ENCODE measurements at regions of chr12 and their contacts with region 1.

Region 1: DNA sequence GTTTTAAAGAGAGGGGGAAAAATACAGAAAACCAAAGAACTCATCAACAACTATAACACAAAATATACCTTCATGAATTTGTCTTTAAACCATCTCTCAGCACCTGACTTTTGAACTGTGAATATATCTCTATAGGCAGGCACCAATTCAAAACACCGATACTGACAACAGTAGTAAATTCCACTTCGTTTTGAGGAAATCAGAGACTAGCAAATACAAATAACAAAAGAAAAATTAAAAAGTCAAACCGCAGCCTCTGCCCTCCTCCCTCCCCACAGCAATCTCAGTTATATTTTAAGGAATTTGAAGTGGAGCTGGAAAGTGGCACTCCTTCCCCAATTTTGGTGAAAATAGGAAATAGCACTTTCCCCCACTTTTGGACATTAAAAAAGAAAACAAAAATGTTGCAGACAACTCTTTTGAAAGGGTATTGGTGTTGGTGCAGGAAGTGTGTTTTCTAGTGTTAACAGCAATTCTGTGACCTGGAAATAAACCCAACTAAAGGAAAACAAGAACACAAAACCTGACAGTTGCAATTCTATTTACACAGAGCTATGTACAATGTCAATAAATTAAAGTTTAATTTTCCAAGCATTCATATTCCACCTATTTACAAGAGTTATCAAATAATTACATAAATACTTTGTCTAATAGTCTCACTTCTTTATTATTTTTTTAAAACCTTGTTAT is 13.5 kb downstream of the TBX3 start:
- DNase-seq: no peak
- H3K4me3 Mint-ChIP-seq: no peak overlapping the region
- H3K27ac Mint-ChIP-seq: no peak overlapping the region
- H3K4me1 Mint-ChIP-seq: no peaks in the 10 kb centered on the region
- H3K27me3 Mint-ChIP-seq: peaks cover 73% of the 10 kb centered on the region

Region 2: GRCh38 chr12:114698566-114699163 is 28.2 kb after region 1 on chr12:
- CTCF ChIA-PET with region 1: no interaction called
- POLR2A ChIA-PET with region 1: interaction called, 10 read pairs
- DNase-seq: no peak
- H3K4me3 Mint-ChIP-seq: no peak overlapping the region
- H3K27ac Mint-ChIP-seq: no peak overlapping the region
- H3K4me1 Mint-ChIP-seq: no peaks in the 10 kb centered on the region
- H3K27me3 Mint-ChIP-seq: peaks cover 86% of the 10 kb centered on the region

Region 3: GRCh38 chr12:114721266-114721665 is 50.8 kb after region 1 on chr12:
- CTCF ChIA-PET with region 1: no interaction called
- POLR2A ChIA-PET with region 1: no interaction called
- DNase-seq: no peak
- H3K4me3 Mint-ChIP-seq: no peak overlapping the region
- H3K27ac Mint-ChIP-seq: no peak overlapping the region
- H3K4me1 Mint-ChIP-seq: no peaks in the 10 kb centered on the region
- H3K27me3 Mint-ChIP-seq: no peaks in the 10 kb centered on the region

Region 4: GRCh38 chr12:114752217-114752616 is 81.8 kb after region 1 on chr12:
- CTCF ChIA-PET with region 1: no interaction called
- POLR2A ChIA-PET with region 1: no interaction called
- DNase-seq: no peak
- H3K4me3 Mint-ChIP-seq: no peak overlapping the region
- H3K27ac Mint-ChIP-seq: no peak overlapping the region
- H3K4me1 Mint-ChIP-seq: no peaks in the 10 kb centered on the region
- H3K27me3 Mint-ChIP-seq: no peaks in the 10 kb centered on the region

Region 5: DNA sequence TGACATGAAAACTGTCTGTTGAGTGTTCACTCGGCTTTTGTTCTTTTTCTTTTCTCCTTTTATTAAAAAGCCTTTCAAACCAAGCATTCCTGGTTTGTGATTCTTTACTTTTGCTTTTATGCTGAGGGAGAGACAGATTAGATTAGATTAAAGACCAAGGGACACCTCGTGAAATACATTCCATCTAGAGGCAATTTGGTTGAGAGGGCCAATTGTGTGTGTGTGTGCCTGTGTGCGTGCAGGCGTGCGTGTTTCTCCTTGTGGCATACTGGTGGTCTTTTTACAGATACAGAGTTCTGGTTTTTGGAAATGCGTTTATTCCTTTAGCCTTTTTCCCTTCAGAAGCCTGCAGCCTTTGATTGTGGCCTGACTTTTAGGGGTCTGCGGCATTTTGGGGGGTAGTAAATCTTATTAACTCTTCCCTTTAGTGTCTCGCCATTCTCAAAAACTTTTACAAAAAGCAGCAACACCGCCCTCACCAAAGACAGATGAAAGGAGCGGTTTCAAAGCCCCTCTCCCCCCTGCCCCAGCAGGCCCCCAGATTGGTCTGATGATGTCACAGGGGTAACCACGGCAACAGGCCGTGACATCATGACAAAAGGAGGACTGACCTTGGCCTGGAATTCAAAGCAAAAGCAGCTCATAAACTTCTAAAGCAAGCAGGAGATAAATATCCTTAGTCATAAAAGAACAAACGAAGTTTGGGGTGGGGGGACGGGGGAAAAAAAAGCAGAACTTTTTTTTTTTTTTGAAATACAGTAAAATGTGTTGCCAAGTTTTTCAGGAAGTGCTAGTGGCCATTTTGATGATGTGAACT is 97.7 kb after region 1 on chr12:
- CTCF ChIA-PET with region 1: no interaction called
- POLR2A ChIA-PET with region 1: no interaction called
- DNase-seq: no peak
- H3K4me3 Mint-ChIP-seq: no peak overlapping the region
- H3K27ac Mint-ChIP-seq: no peak overlapping the region
- H3K4me1 Mint-ChIP-seq: no peaks in the 10 kb centered on the region
- H3K27me3 Mint-ChIP-seq: no peaks in the 10 kb centered on the region

Measured in activated CD4-positive, alpha-beta T cell treated with anti-CD3 and anti-CD28 coated beads, Interleukin-2, amount 10 ng/mL, durations not matched to agents 7 days and 5 days (primary cell).